Left colon (tissue), 2 donors: ENCODE measurements at regions of chr16 and their contacts with region 1.

Region 1: GRCh38 chr16:14249291-14250032 is 178.3 kb downstream of the MRTFB start:
- DNase-seq: peak in 1 of 2 donors; percentile 27
- ATAC-seq: peak; percentile 47

Region 2: DNA sequence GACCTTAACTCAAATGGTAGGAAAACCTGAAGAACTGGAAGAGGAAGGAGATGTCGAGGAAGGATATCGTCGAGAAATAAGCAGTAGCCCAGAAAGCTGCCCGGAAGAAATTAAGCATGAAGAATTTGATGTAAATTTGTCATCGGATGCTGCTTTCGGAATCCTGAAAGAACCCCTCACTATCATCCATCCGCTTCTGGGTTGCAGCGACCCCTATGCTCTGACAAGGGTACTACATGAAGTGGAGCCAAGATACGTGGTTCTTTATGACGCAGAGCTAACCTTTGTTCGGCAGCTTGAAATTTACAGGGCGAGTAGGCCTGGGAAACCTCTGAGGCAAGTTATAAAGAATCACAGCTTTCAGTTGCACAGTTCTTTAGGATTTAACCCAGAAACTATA is 314.1 kb before region 1 on chr16:
- intact Hi-C with region 1: no loop called
- DNase-seq: no peak
- ATAC-seq: no peak

Region 3: DNA sequence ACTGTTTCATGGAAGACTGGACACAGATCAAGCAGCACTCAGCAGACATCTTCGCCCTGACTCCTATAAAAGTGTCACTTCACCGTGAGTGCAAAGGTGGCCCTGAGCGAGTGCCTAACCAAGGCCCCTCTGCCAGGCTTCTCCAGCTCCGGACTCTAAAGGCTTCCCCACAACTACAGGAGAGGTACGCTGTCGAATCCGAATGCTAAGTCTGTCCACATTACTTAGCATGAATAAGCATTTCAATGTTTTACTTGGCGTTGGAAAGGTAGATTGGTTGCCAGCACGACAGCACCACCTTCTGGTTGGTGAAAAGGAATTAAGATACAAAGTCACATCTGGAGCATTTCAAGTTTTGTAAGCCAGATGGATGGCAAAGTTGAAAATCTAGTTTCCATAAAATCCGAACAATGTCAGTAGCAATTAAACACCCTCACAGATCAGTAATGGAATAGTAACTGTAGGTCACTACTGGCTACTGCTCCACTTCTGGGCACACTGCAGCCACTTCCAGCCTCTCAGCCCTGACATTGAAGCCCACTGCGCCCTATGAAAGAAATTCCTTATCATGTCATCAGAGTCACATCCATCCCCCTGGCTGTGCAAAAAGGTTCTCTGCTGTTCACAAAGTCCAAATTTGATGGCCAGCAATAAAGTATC is 279.7 kb after region 1 on chr16:
- intact Hi-C with region 1: loop called in 1 of 2 experiments (anchors 5 kb)
- DNase-seq: peak; percentile 59 to 64
- ATAC-seq: peak; percentile 93

Region 4: DNA sequence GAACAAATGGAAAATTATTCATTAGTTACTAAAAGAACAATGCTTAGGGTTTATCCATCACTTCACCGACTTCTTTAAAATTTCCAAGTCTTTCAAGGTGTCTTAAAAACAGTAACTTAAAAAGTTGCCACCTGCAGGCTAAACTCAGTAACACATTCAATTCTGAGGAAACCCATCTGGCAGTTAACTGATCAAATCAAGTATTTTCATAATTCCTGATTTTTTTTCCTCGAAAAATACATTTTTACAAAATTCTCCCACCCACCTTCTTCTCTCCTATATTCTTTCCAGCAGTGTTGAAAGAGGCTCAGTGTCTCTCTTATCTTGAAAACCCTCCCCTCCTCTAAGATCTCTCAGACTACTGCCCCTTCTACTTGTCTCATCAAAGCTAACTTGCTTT is 350.7 kb after region 1 on chr16:
- intact Hi-C with region 1: loop called in 1 of 2 experiments (anchors 10 kb)
- DNase-seq: no peak
- ATAC-seq: peak; percentile 53